ENCODE measurements at regions of chr4 and their contacts with region 1.

Region 1: DNA sequence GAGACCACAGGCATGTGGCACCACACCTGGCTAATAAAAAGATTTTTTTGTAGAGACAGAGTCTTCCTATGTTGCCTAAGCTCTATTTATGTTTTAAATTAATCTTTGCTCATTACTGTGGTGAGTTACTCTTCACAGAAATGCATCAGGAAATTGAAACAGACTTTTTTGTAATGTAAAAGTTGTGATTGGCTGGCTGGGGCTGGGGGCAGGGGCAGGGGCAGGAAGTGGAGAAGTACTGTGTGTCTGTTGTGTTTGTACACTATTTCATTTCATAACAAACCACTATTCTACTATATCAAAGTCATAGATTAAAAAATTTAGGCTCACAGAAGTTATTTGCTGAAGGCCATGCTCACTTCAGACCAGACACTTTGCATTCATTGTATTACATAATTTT is 19.1 kb upstream of the ABRAXAS1 start:
- DNase-seq: no peak
- CTCF ChIP-seq: no peak

Region 2: GRCh38 chr4:83639849-83640493 is 136.0 kb after region 1 on chr4:
- in situ Hi-C with region 1: loop called (anchors 5 kb)
- DNase-seq: peak; percentile 66
- CTCF ChIP-seq: peak; percentile 75

Measured in GM13976 (cell line).